ENCODE measurements at regions of chr9 and their contacts with region 1.

Region 1: DNA sequence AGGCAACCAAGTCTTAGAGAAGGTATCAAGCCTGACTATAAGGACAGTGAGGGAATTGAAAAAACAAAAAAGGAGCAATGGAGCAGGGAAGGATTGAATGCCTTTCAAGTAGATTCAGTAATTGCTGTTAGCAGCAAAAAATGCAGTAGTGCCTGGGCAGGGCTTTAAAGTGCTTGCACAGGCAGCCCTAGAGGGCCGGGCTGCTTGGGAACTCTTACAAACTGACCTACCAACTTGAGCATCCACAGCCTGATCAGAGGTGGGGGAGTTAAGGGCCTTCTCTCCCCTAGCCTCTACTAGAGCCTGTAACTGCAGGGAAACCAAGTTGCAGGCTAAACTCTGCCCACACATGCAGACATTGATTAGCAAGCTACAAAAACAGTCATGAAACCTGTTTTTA is 19.4 kb downstream of the FXN start:
- DNase-seq: no peak
- H3K4me3 Mint-ChIP-seq: no peak overlapping the region
- H3K27ac Mint-ChIP-seq: no peak overlapping the region
- H3K4me1 Mint-ChIP-seq: no peaks in the 10 kb centered on the region
- H3K27me3 Mint-ChIP-seq: no peaks in the 10 kb centered on the region
- CTCF ChIP-seq: no peak

Region 2: GRCh38 chr9:69012696-69013381 is 42.1 kb before region 1 on chr9:
- CTCF ChIA-PET with region 1: no interaction called
- intact Hi-C with region 1: no loop called
- DNase-seq: no peak
- H3K4me3 Mint-ChIP-seq: no peak overlapping the region
- H3K27ac Mint-ChIP-seq: no peak overlapping the region
- H3K4me1 Mint-ChIP-seq: no peaks in the 10 kb centered on the region
- H3K27me3 Mint-ChIP-seq: peaks cover 25% of the 10 kb centered on the region
- CTCF ChIP-seq: no peak

Region 3: DNA sequence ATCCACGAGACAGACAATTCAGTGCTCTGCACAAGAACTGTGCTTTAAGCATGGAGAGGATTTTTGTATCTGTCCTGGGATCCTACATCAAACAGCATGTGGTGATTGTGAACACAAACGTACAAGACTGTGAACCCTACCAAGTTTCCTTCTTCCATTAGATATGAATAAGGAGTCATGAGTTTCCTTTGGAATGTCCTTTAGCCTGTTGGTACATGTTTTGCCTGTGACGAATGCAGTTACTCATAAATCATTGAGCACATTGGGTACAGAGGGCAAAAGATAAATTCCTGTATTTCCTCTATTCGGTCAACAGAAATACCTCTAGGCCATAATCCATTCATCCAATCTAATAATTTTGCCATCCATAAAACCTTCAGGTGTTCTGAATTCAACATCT is 42.1 kb after region 1 on chr9:
- CTCF ChIA-PET with region 1: interaction called, 3 read pairs
- intact Hi-C with region 1: loop called (anchors 5 kb)
- DNase-seq: no peak
- H3K4me3 Mint-ChIP-seq: peak overlapping the region; percentile 59
- H3K27ac Mint-ChIP-seq: peak overlapping the region; percentile 72
- H3K4me1 Mint-ChIP-seq: peaks cover 43% of the 10 kb centered on the region
- H3K27me3 Mint-ChIP-seq: no peaks in the 10 kb centered on the region
- CTCF ChIP-seq: no peak

Region 4: GRCh38 chr9:69121828-69122548 is 67.0 kb after region 1 on chr9:
- CTCF ChIA-PET with region 1: no interaction called
- intact Hi-C with region 1: loop called (anchors 5 kb)
- DNase-seq: peak; percentile 52
- H3K4me3 Mint-ChIP-seq: peak overlapping the region; percentile 80
- H3K27ac Mint-ChIP-seq: peak overlapping the region; percentile 91
- H3K4me1 Mint-ChIP-seq: peaks cover 8% of the 10 kb centered on the region
- H3K27me3 Mint-ChIP-seq: no peaks in the 10 kb centered on the region
- CTCF ChIP-seq: no peak

Region 5: DNA sequence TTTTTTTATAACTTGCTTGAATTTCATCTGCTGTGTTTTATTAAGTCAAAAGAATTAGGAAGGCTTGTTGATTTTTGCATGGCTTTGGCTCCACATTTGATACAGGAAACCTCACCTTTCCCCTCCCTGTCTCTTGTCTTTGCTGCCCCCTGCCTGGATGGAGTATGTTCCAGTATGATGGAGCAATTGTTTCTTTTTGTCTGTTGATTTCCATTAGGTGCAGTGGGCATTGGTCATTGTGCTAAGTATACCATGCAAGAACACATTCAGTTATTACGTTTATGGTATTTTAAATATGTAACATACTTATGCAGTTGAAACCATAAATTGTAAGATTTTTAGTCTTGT is 138.7 kb after region 1 on chr9:
- CTCF ChIA-PET with region 1: interaction called, 15 read pairs
- intact Hi-C with region 1: loop called (anchors 1 kb)
- DNase-seq: no peak
- H3K4me3 Mint-ChIP-seq: no peak overlapping the region
- H3K27ac Mint-ChIP-seq: no peak overlapping the region
- H3K4me1 Mint-ChIP-seq: peaks cover 19% of the 10 kb centered on the region
- H3K27me3 Mint-ChIP-seq: no peaks in the 10 kb centered on the region
- CTCF ChIP-seq: no peak

Measured in Calu3 (cell line).